ENCODE measurements at regions of chr6 and their contacts with region 1.

Region 1: GRCh38 chr6:56542364-56543331 is 100.0 kb downstream of the DST start:
- DNase-seq: peak; percentile 95
- ATAC-seq: peak; percentile 96

Region 2: DNA sequence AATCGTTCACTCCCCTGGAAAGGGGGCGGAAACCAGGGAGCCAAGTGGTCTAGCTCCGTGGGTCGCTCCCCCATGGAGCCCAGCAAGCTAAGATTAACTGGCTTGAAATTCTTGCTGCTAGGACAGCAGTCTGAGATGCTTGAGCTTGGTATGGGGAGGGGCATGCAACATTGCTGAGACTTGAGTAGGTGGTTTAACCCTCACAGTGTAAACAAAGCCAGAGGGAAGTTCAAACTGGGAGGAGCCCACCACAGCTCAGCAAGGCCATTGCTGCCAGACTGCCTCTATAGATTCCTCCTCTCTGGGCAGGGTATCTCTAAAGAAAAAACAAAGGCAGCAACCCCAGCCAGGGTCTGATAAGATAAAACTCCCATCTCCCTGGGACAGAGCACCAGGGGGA is 338.5 kb before region 1 on chr6:
- intact Hi-C with region 1: no loop called
- DNase-seq: no peak
- ATAC-seq: no peak

Region 3: GRCh38 chr6:56491606-56492328 is 50.9 kb before region 1 on chr6:
- intact Hi-C with region 1: loop called (anchors 10 kb)
- DNase-seq: no peak
- ATAC-seq: peak; percentile 77

Region 4: DNA sequence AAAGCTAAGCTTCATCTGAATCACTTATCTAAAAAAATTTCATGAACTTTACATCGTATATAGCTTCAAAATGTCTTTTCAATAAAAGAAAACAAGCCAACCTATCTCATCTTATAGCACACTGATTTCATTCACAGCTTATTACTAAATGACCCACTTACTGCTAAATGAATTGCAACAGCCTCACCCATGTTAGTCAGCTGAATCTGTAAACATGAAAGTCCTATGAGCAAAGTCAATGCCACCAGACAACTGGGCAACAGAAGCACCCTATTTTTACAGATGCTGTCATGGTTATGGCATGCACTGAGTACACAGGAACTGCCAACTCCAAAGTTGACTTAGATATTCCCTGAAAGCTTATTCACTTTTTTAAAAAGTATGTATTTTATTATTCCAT is 141.2 kb after region 1 on chr6:
- intact Hi-C with region 1: no loop called
- DNase-seq: no peak
- ATAC-seq: peak; percentile 92